ENCODE measurements at regions of chr5 and their contacts with region 1.

Region 1: DNA sequence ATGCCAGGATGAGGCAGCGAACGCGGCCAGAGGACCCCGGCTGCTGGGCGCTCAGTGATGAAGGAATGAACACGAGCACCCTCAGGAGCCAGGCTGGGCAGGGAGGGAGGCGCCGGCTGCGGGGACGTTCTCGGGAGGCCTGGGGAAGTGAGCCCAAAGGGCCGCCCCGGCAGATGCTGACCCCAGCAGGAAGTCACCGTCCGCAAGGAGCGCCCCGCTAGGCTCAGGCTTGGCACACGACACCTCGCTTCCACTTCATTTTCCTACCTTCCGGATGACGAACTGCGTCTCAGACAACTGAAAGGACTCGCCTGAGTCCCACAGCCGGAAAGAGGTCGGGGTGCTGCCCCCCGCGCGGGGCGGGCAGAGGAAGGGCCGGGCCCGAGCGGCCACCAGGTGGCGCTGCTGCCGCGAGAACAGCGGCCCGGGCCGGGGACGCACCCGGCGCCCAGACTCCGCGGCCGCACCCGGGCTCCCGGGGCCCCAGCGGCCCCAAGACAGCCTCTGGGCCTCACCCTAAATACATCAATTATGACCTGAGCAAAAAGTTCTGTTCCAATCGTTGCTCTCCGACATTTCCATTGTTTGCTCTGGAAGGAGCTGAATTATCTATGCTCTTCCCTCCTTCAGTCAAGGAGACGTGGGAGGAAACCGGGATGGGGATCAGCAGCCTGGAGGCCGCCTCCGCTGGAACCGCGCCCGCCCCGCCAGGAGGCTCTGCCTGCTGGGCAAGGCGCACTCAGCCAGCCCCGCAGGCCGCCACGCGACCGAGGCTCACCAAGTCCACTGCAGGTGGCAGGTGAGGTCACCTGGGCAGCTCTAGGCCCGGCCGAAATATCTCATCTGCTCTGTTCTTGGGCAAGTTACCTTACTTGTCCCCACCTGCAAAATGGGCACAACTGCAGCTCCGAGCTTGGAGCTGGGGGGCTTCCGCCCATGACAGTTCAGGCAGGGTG is 107.0 kb downstream of the ZNF354C start:
- DNase-seq: peak; percentile 79
- H3K4me3 ChIP-seq: peak overlapping the region; percentile 20 to 44
- H3K27ac ChIP-seq: no peak overlapping the region
- H3K4me1 ChIP-seq: peaks cover 18% of the 10 kb centered on the region
- H3K27me3 ChIP-seq: no peaks in the 10 kb centered on the region
- CTCF ChIP-seq: peak; percentile 96 to 97 (median 96)
- POLR2A ChIP-seq: no peak

Region 2: GRCh38 chr5:179023528-179024430 is 143.4 kb before region 1 on chr5 and contains the start of gene ZNF879:
- intact Hi-C with region 1: no loop called
- DNase-seq: peak; percentile 96
- H3K4me3 ChIP-seq: peak within 1 kb of the TSS; percentile 68 to 81
- H3K27ac ChIP-seq: peak within 1 kb of the TSS; percentile 70 to 92
- H3K4me1 ChIP-seq: peaks cover 8% of the 10 kb centered on the region
- H3K27me3 ChIP-seq: no peaks in the 10 kb centered on the region
- CTCF ChIP-seq: peak in 1 of 3 experiments; percentile 11
- POLR2A ChIP-seq: no peak
- total RNA-seq, gene ZNF879: 21.8 to 22.8 TPM

Region 3: GRCh38 chr5:179495906-179496455 is 328.8 kb after region 1 on chr5:
- intact Hi-C with region 1: loop called (anchors 5 kb)
- DNase-seq: no peak
- H3K4me3 ChIP-seq: no peak overlapping the region
- H3K27ac ChIP-seq: no peak overlapping the region
- H3K4me1 ChIP-seq: no peaks in the 10 kb centered on the region
- H3K27me3 ChIP-seq: no peaks in the 10 kb centered on the region
- CTCF ChIP-seq: no peak
- POLR2A ChIP-seq: no peak